CD14-positive monocyte (primary cell): ENCODE measurements at regions of chr21 and their contacts with region 1.

Region 1: DNA sequence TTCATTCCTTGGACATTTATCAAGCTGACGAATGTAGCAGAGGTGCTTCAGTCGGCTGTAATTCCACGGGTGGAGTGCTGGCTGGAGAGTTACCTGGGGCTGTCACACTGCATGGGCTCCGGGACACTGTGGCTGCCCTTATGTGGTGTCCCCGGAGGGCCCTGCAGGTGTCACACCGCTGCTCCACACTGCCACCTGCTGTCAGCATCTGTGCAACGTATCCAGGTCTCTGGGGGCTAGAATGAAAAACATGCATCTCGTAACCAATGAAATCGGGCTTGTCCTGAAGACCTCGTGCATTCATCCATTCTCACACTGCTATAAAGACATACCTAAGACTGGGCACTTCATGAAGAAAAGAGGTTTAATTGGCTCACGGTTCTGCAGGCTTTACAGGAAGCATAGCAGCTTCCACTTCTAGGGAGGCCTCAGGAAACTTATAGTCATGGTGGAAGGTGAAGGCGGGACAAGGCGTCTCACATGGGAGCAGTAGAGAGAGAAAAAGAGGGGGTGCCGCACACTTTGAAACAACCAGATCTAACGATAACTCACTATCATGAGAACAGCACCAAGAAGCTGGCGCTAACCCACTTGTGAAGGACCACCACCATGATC is 46.7 kb upstream of the PCBP3 start:
- DNase-seq: peak; percentile 48 to 69 (median 68)
- H3K4me3 ChIP-seq: no peak overlapping the region
- H3K4me3 Mint-ChIP-seq: no peak overlapping the region
- H3K27ac ChIP-seq: no peak overlapping the region
- H3K27ac Mint-ChIP-seq: peak overlapping the region in 1 of 7 donors; percentile 26
- H3K4me1 ChIP-seq: peaks cover 0 to 3% of the 10 kb centered on the region in 2 donors
- H3K4me1 Mint-ChIP-seq: peaks cover 15% of the 10 kb centered on the region
- H3K27me3 ChIP-seq: peaks cover 0 to 2% of the 10 kb centered on the region in 2 donors
- H3K27me3 Mint-ChIP-seq: peaks cover 7 to 15% (median 10%) of the 10 kb centered on the region in 3 donors
- CTCF ChIP-seq: peak; percentile 87

Region 2: GRCh38 chr21:45478115-45478801 is 118.6 kb before region 1 on chr21:
- intact Hi-C with region 1: loop called (anchors 5 kb)
- DNase-seq: peak; percentile 79 to 86 (median 85)
- H3K4me3 ChIP-seq: peak overlapping the region in 2 of 3 experiments; percentile 6 to 68
- H3K4me3 Mint-ChIP-seq: peak overlapping the region; percentile 69 to 86
- H3K27ac ChIP-seq: peak overlapping the region; percentile 80 to 91
- H3K27ac Mint-ChIP-seq: peak overlapping the region; percentile 94 to 98 (median 96)
- H3K4me1 ChIP-seq: peaks cover 50 to 51% of the 10 kb centered on the region in 2 donors
- H3K4me1 Mint-ChIP-seq: peaks cover 43% of the 10 kb centered on the region
- H3K27me3 ChIP-seq: no peaks in the 10 kb centered on the region
- H3K27me3 Mint-ChIP-seq: peaks cover 2 to 6% (median 5%) of the 10 kb centered on the region in 3 donors
- CTCF ChIP-seq: peak; percentile 92